Dorsolateral prefrontal cortex (tissue), 120 donors: ENCODE measurements at regions of chr7 and their contacts with region 1.

Region 1: DNA sequence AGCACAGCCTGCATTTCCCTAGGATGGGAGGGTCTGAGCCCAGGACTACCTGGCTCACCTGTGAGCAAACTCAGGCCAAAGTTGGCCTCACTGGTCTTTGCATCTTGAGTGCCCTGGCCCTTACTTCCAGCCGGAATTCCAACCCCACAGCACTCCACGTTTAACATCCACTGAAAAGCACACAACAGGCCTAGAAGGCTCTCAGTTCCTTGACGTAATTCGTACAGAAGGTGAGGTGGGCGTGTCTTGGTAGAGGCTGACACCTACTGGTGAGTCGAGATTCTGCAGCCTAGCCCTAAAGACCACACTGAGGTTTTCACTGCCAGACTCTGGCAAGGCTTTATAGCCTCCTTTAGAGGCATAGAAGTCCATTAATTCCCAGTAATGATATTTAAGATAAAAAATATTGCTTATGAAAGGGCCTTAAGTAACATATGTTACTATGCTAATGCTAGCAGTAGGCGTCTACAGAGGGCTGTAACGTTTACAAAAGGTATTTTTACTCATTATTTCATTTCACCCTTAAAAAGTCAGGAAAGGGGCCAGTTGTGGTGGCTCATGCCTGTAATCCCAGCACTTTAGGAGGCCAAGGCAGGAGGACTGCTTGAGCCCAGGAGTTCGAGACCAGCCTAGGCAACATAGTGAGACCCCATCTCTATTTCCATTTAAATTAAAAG is 95.8 kb downstream of the HIP1 start:
- DNase-seq: peak in 2 of 10 donors; percentile 8 to 66
- H3K4me3 ChIP-seq: no peak overlapping the region
- H3K27ac ChIP-seq: peak overlapping the region in 11 of 59 donors; percentile 9 to 92 (median 41)
- H3K27me3 ChIP-seq: no peaks in the 10 kb centered on the region
- CTCF ChIP-seq: peak; percentile 19 to 82 (median 64)

Region 2: GRCh38 chr7:75534727-75535307 is 108.1 kb before region 1 on chr7:
- intact Hi-C with region 1: loop called in 1 of 2 experiments (anchors 10 kb)
- DNase-seq: no peak
- H3K4me3 ChIP-seq: no peak overlapping the region
- H3K27ac ChIP-seq: peak overlapping the region in 5 of 59 donors; percentile 1 to 32 (median 7)
- H3K27me3 ChIP-seq: no peaks in the 10 kb centered on the region
- CTCF ChIP-seq: no peak

Region 3: DNA sequence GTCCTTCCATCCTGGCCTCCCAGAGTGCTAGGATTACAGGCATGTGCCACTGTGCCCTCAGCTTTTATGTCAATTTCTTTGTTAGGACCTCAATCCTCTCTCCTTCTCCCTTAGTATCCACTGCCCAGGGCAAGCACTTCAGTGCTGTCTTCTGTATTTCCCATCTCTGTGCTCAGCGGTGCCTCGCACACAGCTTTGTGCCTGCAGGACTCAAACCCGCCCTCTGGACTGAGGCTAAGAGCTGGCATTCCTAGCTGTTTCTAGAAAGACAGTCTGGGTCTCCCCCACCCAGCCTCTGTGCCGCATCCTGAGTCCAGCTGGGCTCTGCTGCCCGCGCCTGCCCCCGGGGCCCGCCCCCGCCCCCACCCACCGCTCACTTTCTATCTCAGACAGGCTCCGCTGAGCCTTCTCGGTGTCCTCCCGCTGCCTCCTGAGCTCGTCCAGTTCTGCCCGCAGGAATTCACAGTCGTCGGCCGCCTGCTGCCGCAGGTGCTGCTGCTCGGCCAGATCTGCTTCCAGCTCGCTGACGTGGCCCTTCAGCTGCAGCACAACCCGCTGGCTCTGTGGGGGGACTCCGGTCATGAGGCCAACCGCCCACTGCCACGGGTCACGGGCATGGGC is 83.5 kb before region 1 on chr7:
- intact Hi-C with region 1: loop called in 1 of 2 experiments (anchors 5 kb)
- DNase-seq: peak in 3 of 10 donors; percentile 34 to 49 (median 34)
- H3K4me3 ChIP-seq: peak overlapping the region in 5 of 59 donors; percentile 5 to 27 (median 10)
- H3K27ac ChIP-seq: peak overlapping the region in 26 of 59 donors; percentile 8 to 66 (median 37)
- H3K27me3 ChIP-seq: no peaks in the 10 kb centered on the region
- CTCF ChIP-seq: no peak

Region 4: DNA sequence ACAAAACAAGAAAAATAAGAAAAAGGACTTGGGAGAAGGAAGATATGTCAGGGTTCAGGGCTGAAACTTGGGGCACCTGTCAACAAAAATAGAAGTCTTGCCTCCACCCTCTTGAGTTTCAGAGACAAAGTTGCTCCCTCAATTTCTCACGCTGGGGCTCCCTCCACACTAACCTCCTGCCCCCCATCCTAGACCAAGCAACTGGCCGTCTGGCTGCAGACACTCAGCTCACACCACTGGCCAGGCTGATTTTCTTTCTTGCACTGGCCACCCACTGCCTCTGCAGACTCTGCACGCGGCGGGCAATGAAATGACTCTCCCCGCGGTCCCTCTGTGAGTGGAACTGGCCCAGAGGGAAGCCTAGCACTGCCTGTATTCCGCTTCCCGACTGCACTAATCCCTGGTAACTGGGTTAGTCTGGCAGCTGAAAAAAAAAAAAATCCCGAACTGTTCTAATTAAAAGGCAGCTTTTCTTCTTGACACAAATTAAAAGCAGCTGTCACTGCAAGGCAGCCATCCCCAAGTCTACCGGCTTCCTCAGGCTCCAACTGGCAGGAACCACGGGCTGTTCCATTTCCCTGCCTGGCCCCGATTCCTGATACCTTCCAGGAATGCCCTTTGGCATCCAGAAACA is 67.3 kb before region 1 on chr7:
- intact Hi-C with region 1: loop called in 1 of 2 experiments (anchors 5 kb)
- DNase-seq: peak in 1 of 10 donors; percentile 28
- H3K4me3 ChIP-seq: no peak overlapping the region
- H3K27ac ChIP-seq: peak overlapping the region in 36 of 59 donors; percentile 3 to 72 (median 48)
- H3K27me3 ChIP-seq: no peaks in the 10 kb centered on the region
- CTCF ChIP-seq: no peak

Region 5: DNA sequence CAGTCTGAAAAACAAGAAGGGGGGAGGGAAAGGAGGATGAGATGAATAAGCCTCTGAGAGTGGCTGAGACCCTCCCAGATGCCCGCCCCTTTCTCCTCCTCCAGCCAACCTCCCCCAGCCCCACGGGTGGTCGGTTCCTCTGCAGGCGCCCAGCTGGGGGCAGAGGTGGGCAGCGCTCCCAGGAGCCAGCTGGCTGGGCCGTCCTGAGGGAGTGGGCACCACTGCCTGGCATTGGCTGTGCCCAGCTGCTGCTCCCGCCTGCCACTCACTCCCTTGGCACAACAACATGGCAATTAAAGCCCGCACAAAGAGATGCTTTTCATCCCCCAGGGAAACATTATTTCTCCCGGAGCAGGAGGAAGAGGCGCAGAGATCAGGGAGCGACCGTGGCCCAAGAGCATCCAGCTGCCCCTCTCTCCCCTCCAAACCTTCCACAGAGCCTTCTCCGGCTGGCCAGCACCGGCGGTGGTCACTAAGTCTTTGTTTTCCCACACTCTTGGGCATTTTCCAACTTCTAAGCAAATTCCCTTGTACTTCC is 43.6 kb before region 1 on chr7:
- intact Hi-C with region 1: loop called in 1 of 2 experiments (anchors 2 kb)
- DNase-seq: peak; percentile 48 to 96 (median 94)
- H3K4me3 ChIP-seq: peak overlapping the region in 35 of 59 donors; percentile 3 to 53 (median 23)
- H3K27ac ChIP-seq: peak overlapping the region; percentile 72 to 98 (median 95)
- H3K27me3 ChIP-seq: no peaks in the 10 kb centered on the region
- CTCF ChIP-seq: peak in 27 of 56 donors; percentile 7 to 48 (median 23)

Region 6: DNA sequence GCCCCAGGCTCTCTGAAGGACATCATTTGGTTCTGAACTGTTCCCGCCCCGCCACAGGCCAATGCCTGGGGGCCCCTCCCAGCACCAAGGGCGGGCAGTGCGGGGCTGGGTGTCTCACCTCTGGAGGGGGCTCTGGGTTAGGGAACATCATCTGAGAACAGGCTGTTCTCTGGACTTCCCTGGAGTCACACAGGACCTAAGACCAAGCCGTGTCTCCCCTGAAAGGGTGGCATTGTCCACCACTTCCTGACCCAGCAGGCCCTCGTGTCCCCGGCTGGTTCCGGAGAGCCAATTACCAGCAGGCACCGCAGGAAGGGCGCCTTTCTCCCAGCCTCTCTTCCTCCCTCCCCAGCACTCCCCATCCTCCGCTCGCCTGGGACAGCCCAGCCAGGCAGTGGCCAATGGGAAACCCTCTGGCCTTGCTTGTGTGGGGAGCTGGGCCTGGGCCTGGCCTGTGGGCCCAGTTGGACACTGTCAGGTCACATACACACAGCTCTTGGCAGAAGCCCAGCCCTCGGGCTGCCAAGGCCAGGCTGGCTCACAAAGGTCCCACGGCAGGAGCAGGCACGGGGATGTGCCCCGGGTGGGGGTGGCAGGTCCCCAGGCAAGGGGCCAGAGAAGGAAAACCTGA is 31.3 kb before region 1 on chr7:
- intact Hi-C with region 1: no loop called
- DNase-seq: peak; percentile 86 to 97 (median 94)
- H3K4me3 ChIP-seq: peak overlapping the region in 53 of 59 donors; percentile 2 to 66 (median 38)
- H3K27ac ChIP-seq: peak overlapping the region; percentile 76 to 99 (median 93)
- H3K27me3 ChIP-seq: no peaks in the 10 kb centered on the region
- CTCF ChIP-seq: peak in 30 of 56 donors; percentile 5 to 55 (median 27)

Region 7: DNA sequence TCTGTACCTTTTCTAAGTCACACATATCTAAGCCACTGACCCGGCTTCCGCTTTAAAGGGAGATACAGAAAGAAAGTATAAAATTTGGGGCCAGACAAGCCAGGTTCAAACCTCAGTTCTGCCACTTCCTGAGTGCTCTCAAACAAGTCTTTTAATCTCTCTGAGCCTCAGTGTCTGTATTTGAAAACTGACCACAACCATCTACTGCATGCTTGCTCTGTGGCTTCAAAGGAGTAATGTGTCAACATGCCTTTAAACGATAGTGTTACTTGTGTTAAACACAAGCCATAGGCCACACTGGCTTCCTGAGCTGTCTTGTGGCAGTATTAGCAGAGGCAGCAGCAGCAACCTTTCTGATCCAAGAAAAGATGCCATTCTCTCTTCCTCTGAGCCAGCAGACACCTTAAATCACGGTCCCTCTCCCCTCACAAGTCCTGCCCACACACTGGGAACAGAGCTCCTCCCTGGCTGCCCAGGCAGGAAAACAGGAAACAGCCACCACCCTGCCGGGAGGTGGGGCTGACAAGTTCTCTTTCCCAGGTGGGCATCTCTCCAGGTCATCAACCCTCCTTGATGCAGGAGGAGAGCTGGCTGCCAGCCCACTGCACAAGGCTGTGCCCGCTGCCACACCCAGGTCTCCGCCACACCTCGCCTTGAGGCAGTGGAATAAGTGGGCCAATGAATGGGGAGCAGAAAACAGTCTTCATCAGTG is 85.1 kb after region 1 on chr7:
- intact Hi-C with region 1: no loop called
- DNase-seq: peak in 1 of 10 donors; percentile 23
- H3K4me3 ChIP-seq: no peak overlapping the region
- H3K27ac ChIP-seq: peak overlapping the region in 8 of 59 donors; percentile 3 to 41 (median 18)
- H3K27me3 ChIP-seq: no peaks in the 10 kb centered on the region
- CTCF ChIP-seq: no peak